Motor neuron (in vitro differentiated cells): ENCODE measurements at regions of chr12 and their contacts with region 1.

Region 1: DNA sequence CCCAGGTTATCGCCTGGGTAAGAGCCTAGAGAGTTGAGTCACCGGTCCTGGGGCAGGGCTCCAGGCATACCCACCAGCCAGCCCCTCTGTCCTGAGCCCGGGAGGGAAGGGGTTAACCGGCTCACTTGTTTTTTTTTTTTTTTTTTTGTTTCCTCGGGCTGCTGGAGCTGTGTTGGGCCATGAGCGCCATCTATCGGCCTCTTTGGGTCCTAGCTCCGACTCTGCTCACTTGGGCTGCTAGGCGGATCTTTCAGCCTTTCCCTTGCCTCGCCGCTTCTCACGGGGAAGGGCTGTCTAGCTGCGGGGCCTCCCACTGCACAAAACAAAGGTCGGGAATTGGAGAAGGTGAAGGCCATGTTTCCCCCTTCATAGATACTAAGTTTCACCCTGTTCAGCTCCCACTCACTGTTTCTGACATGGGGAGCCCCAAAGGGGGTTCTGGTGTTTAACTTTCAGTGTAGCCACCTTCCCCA is 2.8 kb upstream of the SMUG1 start:
- ATAC-seq: peak; percentile 34 to 48 (median 44)
- H3K4me3 ChIP-seq: peak overlapping the region in 3 of 5 donors; percentile 0 to 2 (median 0)
- H3K27ac ChIP-seq: no peak overlapping the region
- H3K4me1 ChIP-seq: peaks cover 42 to 54% of the 10 kb centered on the region in 2 donors

Region 2: GRCh38 chr12:54021432-54022013 is 170.1 kb before region 1 on chr12:
- in situ Hi-C with region 1: loop called in 4 of 9 experiments (anchors 10 to 25 kb)
- ATAC-seq: peak in 1 of 8 experiments; percentile 5
- H3K4me3 ChIP-seq: no peak overlapping the region
- H3K27ac ChIP-seq: peak overlapping the region in 1 of 2 donors; percentile 9
- H3K4me1 ChIP-seq: peaks cover 15 to 83% of the 10 kb centered on the region in 2 donors

Region 3: GRCh38 chr12:54032627-54033100 is 158.9 kb before region 1 on chr12 and contains the start of gene HOXC5:
- in situ Hi-C with region 1: loop called in 5 of 9 experiments (anchors 5 to 25 kb)
- ATAC-seq: peak in 7 of 8 experiments; percentile 2 to 47 (median 34)
- H3K4me3 ChIP-seq: peak within 1 kb of the TSS; percentile 41 to 62 (median 49)
- H3K27ac ChIP-seq: peak within 1 kb of the TSS; percentile 94
- H3K4me1 ChIP-seq: peaks cover 49 to 72% of the 10 kb centered on the region in 2 donors
- total RNA-seq, gene HOXC5: 4.4 to 49.2 (median 10.4) TPM